Activated CD4-positive, alpha-beta memory T cell treated with anti-CD3 and anti-CD28 coated beads, Interleukin-2, amount 10 ng/mL, durations not matched to agents 7 days and 5 days (primary cell): ENCODE measurements at regions of chr7 and their contacts with region 1.

Region 1: GRCh38 chr7:106071356-106071998 is 40.6 kb downstream of the SYPL1 start:
- DNase-seq: peak; percentile 57
- H3K4me3 Mint-ChIP-seq: peak overlapping the region; percentile 70
- H3K27ac Mint-ChIP-seq: peak overlapping the region; percentile 96
- H3K4me1 Mint-ChIP-seq: peaks cover 44% of the 10 kb centered on the region
- H3K27me3 Mint-ChIP-seq: no peaks in the 10 kb centered on the region

Region 2: GRCh38 chr7:105952917-105953595 is 118.4 kb before region 1 on chr7:
- CTCF ChIA-PET with region 1: no interaction called
- POLR2A ChIA-PET with region 1: no interaction called
- DNase-seq: no peak
- H3K4me3 Mint-ChIP-seq: no peak overlapping the region
- H3K27ac Mint-ChIP-seq: no peak overlapping the region
- H3K4me1 Mint-ChIP-seq: no peaks in the 10 kb centered on the region
- H3K27me3 Mint-ChIP-seq: peaks cover 8% of the 10 kb centered on the region

Region 3: GRCh38 chr7:106022193-106022821 is 49.2 kb before region 1 on chr7:
- CTCF ChIA-PET with region 1: no interaction called
- POLR2A ChIA-PET with region 1: interaction called, 15 read pairs
- DNase-seq: peak; percentile 81
- H3K4me3 Mint-ChIP-seq: peak overlapping the region; percentile 34
- H3K27ac Mint-ChIP-seq: peak overlapping the region; percentile 67
- H3K4me1 Mint-ChIP-seq: peaks cover 43% of the 10 kb centered on the region
- H3K27me3 Mint-ChIP-seq: peaks cover 46% of the 10 kb centered on the region

Region 4: GRCh38 chr7:106056513-106057203 is 14.8 kb before region 1 on chr7:
- CTCF ChIA-PET with region 1: interaction called, 12 read pairs
- POLR2A ChIA-PET with region 1: interaction called, 7 read pairs
- DNase-seq: peak; percentile 76
- H3K4me3 Mint-ChIP-seq: no peak overlapping the region
- H3K27ac Mint-ChIP-seq: no peak overlapping the region
- H3K4me1 Mint-ChIP-seq: peaks cover 30% of the 10 kb centered on the region
- H3K27me3 Mint-ChIP-seq: peaks cover 9% of the 10 kb centered on the region

Region 5: DNA sequence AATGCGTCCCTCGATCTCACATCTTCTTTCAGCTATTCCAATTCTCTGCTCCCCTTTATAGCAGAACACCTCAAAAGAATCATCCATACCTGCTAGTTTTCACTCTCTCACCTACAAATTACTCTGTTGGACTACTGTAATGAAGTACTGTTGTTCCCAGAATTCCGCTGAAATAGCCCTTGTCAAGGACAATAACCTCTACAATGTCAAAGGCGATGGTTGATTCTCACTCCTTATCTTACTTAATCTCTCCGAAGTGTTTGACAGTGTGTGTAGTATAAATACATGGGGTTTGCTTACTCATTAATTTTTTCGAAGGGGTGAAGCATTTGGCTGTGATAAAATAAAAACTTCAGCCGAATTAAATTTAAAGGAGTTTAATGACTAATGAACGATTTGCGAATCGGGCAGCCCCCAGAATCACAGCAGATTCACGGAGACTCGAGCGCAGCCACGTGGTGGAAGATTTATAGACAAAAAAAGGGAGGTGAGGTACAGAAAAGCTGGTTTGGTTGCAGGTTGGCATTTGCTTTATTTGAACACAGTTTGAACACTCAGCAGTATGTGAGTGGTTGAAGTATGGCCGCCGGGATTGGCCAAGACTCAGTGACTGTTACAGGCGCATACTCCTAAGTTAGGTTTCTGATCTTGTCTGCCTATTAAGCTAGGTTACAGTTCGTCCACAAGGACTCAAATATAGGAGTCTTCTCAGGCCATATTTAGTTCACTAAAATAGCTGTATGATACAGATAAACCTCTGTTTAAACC is 10.8 kb after region 1 on chr7:
- CTCF ChIA-PET with region 1: no interaction called
- POLR2A ChIA-PET with region 1: interaction called, 17 read pairs
- DNase-seq: no peak
- H3K4me3 Mint-ChIP-seq: no peak overlapping the region
- H3K27ac Mint-ChIP-seq: no peak overlapping the region
- H3K4me1 Mint-ChIP-seq: peaks cover 8% of the 10 kb centered on the region
- H3K27me3 Mint-ChIP-seq: peaks cover 2% of the 10 kb centered on the region

Region 6: DNA sequence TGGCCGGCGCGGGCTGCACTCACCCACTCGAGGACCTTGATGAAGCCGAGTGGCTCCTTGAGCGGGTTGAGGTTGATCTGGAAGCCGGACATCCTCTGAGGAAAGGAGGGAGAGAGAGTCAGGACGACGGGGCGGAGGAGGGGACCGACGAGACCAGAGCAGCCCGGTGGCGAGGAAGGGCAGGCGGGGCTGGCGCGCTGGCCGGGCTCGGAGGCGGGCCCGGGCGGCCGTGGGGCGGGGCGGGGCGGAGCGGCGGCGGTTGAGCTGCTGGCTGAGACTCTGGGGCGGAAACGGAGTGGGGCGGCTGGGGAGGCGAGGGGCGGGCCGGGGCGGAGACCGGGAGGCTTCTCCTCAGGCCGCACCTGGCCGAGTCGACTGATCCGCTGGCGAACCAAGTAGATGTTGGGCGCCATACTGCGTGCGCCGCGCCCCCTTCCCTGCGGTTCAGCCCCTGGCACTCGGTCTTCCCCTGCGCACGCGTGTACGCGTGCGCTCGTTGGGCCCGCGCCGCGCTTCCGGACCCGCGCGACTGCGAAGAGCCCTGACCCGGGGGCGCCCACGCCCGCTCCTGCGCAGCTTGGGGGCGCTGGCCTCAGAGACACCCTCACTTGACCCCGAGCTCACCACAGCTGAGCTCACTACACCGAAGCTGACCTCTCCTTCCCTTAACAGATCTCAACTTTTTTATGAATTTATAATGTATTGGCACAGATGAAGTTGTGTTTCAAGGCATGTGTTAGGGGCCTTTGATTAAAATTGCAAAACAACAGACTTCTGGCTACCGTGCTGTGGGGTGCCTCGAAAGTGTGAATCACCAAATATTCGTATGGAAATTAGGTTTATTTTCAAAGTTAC is 40.9 kb after region 1 on chr7 and contains the start of gene SYPL1:
- CTCF ChIA-PET with region 1: interaction called, 11 read pairs
- POLR2A ChIA-PET with region 1: interaction called, 93 read pairs
- DNase-seq: peak; percentile 91
- H3K4me3 Mint-ChIP-seq: peak within 1 kb of the TSS; percentile 82
- H3K27ac Mint-ChIP-seq: peak within 1 kb of the TSS; percentile 85
- H3K4me1 Mint-ChIP-seq: peaks cover 45% of the 10 kb centered on the region
- H3K27me3 Mint-ChIP-seq: peaks cover 14% of the 10 kb centered on the region
- total RNA-seq, gene SYPL1: 37.5 to 38.8 TPM